Heart left ventricle (tissue), 16 donors: ENCODE measurements at regions of chrX and their contacts with region 1.

Region 1: DNA sequence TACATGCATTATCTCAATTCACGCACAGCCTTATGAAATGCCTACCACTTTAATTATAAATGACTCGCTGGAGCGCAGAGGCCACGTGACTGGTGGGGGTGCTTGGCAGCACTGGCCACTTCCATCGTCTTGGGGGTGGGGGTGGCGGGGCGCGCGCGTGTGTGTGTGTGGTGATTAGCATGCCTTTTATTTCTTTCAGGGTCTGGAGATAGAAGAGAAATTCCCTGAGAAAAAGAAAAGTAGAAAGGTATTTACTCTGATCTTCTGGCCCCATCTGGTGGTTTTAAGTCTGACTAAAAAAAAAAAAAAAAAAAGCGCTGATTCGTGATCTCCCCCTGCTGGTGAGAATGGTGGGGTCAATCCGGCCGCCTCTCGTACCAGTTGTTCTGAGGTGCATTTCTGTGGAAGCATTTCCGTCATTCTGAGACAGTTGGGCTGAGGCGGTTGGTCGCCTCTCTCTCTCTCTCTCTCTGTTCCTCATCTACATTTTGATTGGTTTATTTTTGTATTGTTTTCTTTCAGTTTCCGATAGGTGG is at the start of gene CCNB3:
- DNase-seq: peak; percentile 58 to 81 (median 67)
- ATAC-seq: peak; percentile 85 to 96 (median 92)
- H3K4me3 ChIP-seq: peak within 1 kb of the TSS in 10 of 12 donors; percentile 9 to 48 (median 34)
- H3K27ac ChIP-seq: peak within 1 kb of the TSS in 7 of 12 donors; percentile 19 to 51 (median 30)
- H3K4me1 ChIP-seq: peaks cover 0 to 6% (median 2%) of the 10 kb centered on the region in 12 donors
- H3K27me3 ChIP-seq: peaks cover 0 to 6% (median 0%) of the 10 kb centered on the region in 9 donors
- CTCF ChIP-seq: peak; percentile 42 to 71 (median 56)
- POLR2A ChIP-seq: no peak
- total RNA-seq, gene CCNB3: 0.12 to 0.80 (median 0.31) TPM in 8 of 9 donors, not detected in the other

Region 2: DNA sequence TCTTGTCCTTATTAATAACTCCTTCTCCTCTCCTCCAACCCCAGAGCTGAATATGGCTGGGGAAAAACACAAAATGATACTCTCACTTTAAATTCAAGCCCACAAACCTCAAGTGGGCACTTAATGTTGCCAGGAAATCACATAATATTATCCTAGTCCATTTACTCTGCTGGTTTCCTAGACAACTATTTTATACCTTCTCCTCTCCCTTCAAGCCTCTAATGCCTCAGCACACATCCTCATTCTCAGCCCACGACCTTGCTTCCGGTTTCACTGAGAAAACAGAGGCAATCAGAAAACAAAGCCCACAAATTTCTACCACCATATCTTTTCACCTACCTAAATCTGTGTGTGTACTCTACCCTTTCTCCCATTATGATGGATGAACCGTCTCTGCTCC is 294.1 kb before region 1 on chrX:
- intact Hi-C with region 1: loop called in 4 of 10 experiments (anchors 1 to 5 kb)
- DNase-seq: no peak
- ATAC-seq: no peak
- H3K4me3 ChIP-seq: no peak overlapping the region
- H3K27ac ChIP-seq: no peak overlapping the region
- H3K4me1 ChIP-seq: no peaks in the 10 kb centered on the region
- H3K27me3 ChIP-seq: peaks cover 0 to 17% (median 0%) of the 10 kb centered on the region in 9 donors
- CTCF ChIP-seq: no peak
- POLR2A ChIP-seq: no peak

Region 3: GRCh38 chrX:49915361-49916222 is 288.8 kb before region 1 on chrX:
- intact Hi-C with region 1: loop called in 4 of 10 experiments (anchors 1 to 5 kb)
- DNase-seq: peak in 3 of 5 donors; percentile 25 to 32 (median 30)
- ATAC-seq: peak in 3 of 4 donors; percentile 68 to 72 (median 72)
- H3K4me3 ChIP-seq: no peak overlapping the region
- H3K27ac ChIP-seq: no peak overlapping the region
- H3K4me1 ChIP-seq: peaks cover 0 to 6% (median 0%) of the 10 kb centered on the region in 12 donors
- H3K27me3 ChIP-seq: peaks cover 0 to 14% (median 0%) of the 10 kb centered on the region in 9 donors
- CTCF ChIP-seq: peak; percentile 58 to 94 (median 74)
- POLR2A ChIP-seq: no peak

Region 4: GRCh38 chrX:50100188-50100587 is 104.2 kb before region 1 on chrX:
- intact Hi-C with region 1: loop called in 4 of 10 experiments (anchors 2 to 5 kb)
- DNase-seq: no peak
- ATAC-seq: peak in 2 of 4 donors; percentile 39 to 50
- H3K4me3 ChIP-seq: no peak overlapping the region
- H3K27ac ChIP-seq: no peak overlapping the region
- H3K4me1 ChIP-seq: no peaks in the 10 kb centered on the region
- H3K27me3 ChIP-seq: peaks cover 0 to 8% (median 0%) of the 10 kb centered on the region in 9 donors
- CTCF ChIP-seq: peak in 9 of 12 donors; percentile 10 to 49 (median 38)
- POLR2A ChIP-seq: no peak